ENCODE measurements at regions of chr20 and their contacts with region 1.

Region 1: GRCh38 chr20:1646975-1647431 is 10.6 kb downstream of the SIRPG start:
- DNase-seq: no peak
- H3K4me3 ChIP-seq: no peak overlapping the region
- H3K27ac ChIP-seq: no peak overlapping the region
- H3K4me1 ChIP-seq: peaks cover 0 to 16% (median 6%) of the 10 kb centered on the region in 6 donors
- H3K27me3 ChIP-seq: no peaks in the 10 kb centered on the region
- CTCF ChIP-seq: no peak
- POLR2A ChIP-seq: no peak

Region 2: DNA sequence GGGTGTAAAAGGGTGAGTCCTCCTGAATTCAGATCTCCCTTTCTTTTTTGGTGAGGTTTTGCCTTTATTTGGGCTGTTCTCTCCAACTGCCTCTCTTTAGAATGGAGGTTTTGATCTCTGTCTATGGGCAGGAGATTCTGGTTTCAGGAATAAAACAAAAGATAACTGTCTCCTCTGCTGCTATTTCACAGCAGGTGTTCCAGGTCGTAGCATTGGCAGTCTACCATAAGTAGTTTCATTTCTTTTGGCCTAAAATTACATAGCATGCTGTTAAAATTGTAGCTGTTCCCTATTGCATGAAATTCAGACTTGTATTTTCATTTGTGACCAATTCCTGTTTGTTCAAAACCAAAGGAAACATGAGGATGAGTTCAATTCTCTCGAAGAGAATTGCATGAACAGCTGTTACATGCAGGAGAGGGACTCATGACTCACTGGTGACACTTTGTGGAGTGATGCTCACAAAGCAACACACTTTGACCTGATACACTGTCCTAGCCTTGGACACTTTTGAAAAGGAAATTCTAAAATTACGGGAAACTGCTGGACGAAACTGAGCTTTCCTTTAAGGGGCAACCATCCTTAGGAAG is 87.4 kb after region 1 on chr20:
- intact Hi-C with region 1: loop called (anchors 10 kb)
- DNase-seq: no peak
- H3K4me3 ChIP-seq: no peak overlapping the region
- H3K27ac ChIP-seq: peak overlapping the region in 1 of 8 donors; percentile 9
- H3K4me1 ChIP-seq: peaks cover 0 to 21% (median 6%) of the 10 kb centered on the region in 6 donors
- H3K27me3 ChIP-seq: peaks cover 0 to 8% (median 0%) of the 10 kb centered on the region in 7 donors
- CTCF ChIP-seq: peak in 5 of 11 experiments; percentile 34 to 57 (median 42)
- POLR2A ChIP-seq: no peak

Region 3: DNA sequence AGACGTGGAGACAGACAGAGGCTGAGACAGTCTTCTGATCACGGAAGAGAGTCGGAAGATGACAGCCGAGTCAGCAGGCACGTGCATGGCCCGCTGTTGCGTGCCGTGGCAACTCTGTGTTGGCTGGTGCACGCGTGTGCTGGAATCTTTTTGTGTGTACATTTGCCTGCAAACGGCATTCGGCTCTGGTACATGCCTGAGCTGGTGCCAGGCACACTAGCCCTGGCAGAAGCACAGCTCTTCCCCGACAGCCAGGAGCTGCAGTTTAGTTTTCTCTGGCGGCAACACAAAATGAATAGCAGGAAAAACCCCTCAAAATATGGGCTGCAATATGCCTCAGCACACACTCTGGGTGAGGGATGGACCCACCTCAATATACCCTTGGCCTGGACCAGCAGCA is 347.6 kb after region 1 on chr20:
- intact Hi-C with region 1: no loop called
- DNase-seq: no peak
- H3K4me3 ChIP-seq: no peak overlapping the region
- H3K27ac ChIP-seq: no peak overlapping the region
- H3K4me1 ChIP-seq: no peaks in the 10 kb centered on the region
- H3K27me3 ChIP-seq: peaks cover 0 to 100% (median 33%) of the 10 kb centered on the region in 7 donors
- CTCF ChIP-seq: no peak
- POLR2A ChIP-seq: no peak